Activated T-helper 2 cell treated with anti-CD3 and anti-CD28 coated beads, Interferon-gamma antibody, Interleukin-2, Interleukin-4, amounts not matched to agents 10 μg/mL and 5 μg/mL and 100 μg/mL, durations not matched to agents 14 hours and 24 hours and 36 hours (primary cell): ENCODE measurements at regions of chrX and their contacts with region 1.

Region 1: DNA sequence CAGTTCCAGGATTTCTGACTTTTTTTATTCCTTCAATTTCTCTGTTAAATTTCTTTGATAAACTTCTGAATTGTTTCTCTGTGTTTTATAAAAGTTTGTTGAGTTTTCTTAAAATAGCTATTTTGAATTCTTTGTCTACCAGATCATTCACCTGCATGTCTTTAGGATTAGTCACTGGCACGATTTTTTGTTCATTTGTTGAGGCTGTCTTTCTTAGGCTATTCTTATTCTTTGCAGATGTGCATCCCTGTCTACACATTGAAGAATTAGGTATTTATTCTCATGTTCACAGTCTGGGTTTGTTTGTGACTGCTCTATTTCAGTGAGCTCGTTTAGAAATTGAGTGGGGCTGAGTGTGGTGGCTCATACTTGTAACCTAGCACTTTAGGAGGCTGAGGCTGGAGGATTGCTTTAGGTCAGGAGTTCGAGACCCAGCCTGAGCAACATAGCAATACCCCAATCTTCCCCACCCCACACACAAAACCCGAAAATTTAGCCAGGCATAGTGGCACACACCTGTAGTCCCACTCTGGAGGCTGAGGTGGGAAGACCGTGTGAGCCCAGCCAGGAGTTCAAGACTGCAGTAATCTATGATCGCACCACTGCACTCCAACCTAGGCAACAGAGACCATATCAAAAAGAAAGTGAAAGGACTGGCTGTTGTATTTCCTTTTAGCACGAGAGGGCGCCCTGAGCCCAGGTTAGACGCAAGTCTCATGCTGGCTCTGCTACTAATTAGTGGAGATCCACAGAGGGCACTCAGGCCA is 42.0 kb downstream of the F8 start:
- DNase-seq: peak; percentile 67
- H3K4me3 Mint-ChIP-seq: peak overlapping the region; percentile 71
- H3K27ac Mint-ChIP-seq: peak overlapping the region; percentile 69
- H3K4me1 Mint-ChIP-seq: peaks cover 12% of the 10 kb centered on the region
- H3K27me3 Mint-ChIP-seq: no peaks in the 10 kb centered on the region

Region 2: DNA sequence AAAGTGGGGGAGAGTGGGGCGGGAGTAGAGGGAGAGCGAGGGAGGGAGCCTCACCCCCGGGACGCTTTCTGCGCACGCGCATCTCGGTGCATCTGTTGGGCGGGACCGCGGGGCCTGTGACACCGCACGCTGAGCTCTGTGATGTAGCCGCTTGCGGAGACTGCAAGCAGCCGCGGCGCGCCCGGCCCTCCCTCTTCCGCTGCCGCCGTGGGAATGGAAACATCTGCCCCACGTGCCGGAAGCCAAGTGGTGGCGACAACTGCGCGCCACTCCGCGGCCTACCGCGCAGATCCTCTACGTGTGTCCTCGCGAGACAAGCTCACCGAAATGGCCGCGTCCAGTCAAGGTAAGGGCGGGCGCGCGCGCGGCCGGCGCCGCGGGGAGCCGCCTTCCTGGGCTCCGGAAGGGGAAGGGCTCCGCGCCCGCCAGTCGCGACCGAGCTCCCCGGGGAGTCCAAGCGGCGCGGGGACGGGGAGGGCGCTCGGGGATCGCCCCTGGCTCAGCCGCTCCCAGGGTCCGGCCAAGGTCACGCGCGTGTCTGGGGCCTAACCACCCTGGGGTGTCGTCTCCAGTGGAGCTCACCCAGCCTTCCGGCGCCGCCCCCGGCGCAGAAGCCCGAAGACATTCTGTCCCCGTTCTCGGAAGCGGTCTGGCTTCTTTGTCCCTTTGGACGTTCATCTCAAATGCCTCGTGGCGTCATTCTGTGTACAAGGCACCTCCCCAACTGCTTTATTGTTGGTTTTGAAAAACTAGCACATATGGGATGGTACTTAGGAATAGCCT is 46.4 kb after region 1 on chrX and contains the start of gene FUNDC2:
- intact Hi-C with region 1: loop called (anchors 2 kb)
- DNase-seq: peak; percentile 93
- H3K4me3 Mint-ChIP-seq: peak within 1 kb of the TSS; percentile 85
- H3K27ac Mint-ChIP-seq: peak within 1 kb of the TSS; percentile 91
- H3K4me1 Mint-ChIP-seq: peaks cover 19% of the 10 kb centered on the region
- H3K27me3 Mint-ChIP-seq: peaks cover 7% of the 10 kb centered on the region
- total RNA-seq, gene FUNDC2: 70.1 and 70.7 TPM in 2 replicates

Region 3: GRCh38 chrX:155070975-155071693 is 90.6 kb after region 1 on chrX and contains the starts of genes BRCC3, CMC4 and MTCP1:
- intact Hi-C with region 1: loop called (anchors 5 kb)
- DNase-seq: peak; percentile 74
- H3K4me3 Mint-ChIP-seq: peak within 1 kb of the TSS; percentile 94
- H3K27ac Mint-ChIP-seq: peak within 1 kb of the TSS; percentile 95
- H3K4me1 Mint-ChIP-seq: peaks cover 44% of the 10 kb centered on the region
- H3K27me3 Mint-ChIP-seq: no peaks in the 10 kb centered on the region
- total RNA-seq, gene BRCC3: 29.3 and 34.9 TPM in 2 replicates
- total RNA-seq, gene CMC4: 1.9 and 4.3 TPM in 2 replicates
- total RNA-seq, gene MTCP1: 12.3 and 19.0 TPM in 2 replicates

Region 4: DNA sequence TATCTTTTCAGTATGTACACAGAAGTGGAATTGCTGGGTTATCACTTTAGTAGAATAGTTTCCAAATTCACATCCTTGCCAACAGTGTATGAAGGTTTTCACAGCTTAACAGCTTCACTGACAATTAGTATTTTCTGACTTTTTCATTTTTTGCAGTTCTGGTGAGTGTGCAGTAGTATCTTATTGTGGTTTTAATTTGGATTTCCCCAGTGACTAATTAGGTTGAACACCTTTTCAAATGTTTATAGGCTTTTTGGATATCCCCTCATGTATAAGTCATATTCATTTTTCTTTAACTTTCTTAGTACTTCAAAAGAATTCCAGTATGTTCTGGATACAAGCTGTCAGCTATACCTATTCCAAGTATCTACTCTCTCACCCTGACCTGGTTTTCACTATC is 127.9 kb after region 1 on chrX:
- intact Hi-C with region 1: no loop called
- DNase-seq: no peak
- H3K4me3 Mint-ChIP-seq: no peak overlapping the region
- H3K27ac Mint-ChIP-seq: no peak overlapping the region
- H3K4me1 Mint-ChIP-seq: peaks cover 3% of the 10 kb centered on the region
- H3K27me3 Mint-ChIP-seq: no peaks in the 10 kb centered on the region

Region 5: DNA sequence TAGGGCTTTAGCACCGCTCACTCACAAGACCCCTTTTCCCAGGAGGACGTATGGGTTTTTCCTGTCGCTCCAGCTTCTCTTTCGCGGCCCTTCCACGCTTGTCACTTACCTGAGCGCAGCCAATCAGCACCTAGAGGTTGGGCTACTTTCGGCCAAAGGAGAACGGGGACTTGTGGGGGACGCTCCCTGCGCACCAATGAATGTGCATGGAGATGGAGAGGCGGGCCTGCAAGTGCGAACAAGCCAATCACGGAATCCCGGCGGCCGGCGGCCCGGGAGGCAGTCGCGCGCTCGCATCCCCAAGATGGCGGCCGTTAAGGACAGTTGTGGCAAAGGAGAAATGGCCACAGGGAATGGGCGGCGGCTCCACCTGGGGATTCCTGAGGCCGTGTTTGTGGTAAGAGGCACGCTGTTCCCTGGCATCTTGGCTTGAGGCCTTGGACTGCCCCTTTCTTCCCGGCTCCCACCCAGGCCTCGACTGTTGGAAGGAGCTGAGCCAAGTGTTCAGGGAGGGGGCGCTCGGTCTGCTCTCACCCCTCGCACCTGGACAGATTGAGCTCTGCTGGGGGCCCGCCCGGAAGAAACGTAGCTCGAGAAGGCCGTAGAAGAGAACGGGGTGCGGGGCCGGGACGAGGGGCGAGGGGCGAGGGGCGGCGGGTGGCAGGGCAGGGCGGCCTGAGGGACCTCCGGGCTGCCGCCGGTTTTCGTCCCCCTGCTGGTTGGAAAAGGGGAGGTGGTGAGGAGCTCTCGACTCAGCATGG is 235.8 kb after region 1 on chrX and contains the start of gene VBP1:
- intact Hi-C with region 1: loop called (anchors 5 kb)
- DNase-seq: peak; percentile 83
- H3K4me3 Mint-ChIP-seq: peak within 1 kb of the TSS; percentile 98
- H3K27ac Mint-ChIP-seq: peak within 1 kb of the TSS; percentile 92
- H3K4me1 Mint-ChIP-seq: peaks cover 19% of the 10 kb centered on the region
- H3K27me3 Mint-ChIP-seq: no peaks in the 10 kb centered on the region
- total RNA-seq, gene VBP1: 73.7 and 76.3 TPM in 2 replicates